ENCODE measurements at regions of chr15 and their contacts with region 1.

Region 1: DNA sequence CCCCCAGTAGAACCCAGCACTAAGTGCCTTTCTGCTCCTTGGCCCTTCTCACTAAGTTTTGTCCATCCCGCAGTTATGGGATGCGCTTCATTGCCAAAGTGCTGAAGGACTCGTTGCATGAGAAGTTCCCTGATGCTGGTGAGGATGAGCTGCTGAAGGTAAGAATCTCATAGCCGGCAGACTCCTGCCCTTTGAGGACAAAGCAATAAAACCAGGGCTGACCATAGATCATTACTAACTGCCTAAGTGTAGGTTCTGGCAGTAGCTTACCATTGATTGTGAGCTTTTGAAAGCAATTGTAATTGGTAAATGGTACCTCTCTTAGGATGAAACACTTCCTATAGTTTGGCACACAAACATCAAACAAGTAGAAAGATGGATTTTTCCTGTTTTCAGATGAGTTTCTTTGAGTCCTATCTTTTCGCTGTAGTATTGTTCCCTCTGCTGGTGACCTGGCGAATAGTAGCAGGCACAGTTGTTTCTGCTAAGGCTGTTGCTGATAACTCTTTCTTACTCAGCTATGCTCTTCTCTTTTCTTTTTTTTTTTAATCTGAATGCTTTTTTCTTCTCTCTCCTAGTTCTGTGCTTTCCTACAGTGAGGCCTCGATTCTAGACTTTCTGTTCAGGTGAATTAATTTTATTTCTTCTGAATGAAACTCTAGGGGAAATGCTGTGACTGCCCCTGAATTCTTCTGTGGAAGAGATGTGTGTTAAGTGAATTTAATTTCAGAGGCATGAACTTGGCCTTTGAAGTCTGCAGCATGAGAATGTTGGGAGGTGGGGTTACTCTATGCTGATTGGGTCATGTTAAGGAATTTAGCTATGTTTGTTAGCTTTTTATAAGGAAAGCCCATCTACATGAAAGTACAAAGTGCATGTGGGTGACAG is 47.4 kb upstream of the CRTC3 start:
- DNase-seq: peak; percentile 35 to 64
- ATAC-seq: peak; percentile 83 to 87; a peak in 5 of 6 replicates
- H3K4me3 ChIP-seq: no peak overlapping the region
- H3K27ac ChIP-seq: no peak overlapping the region
- H3K4me1 ChIP-seq: no peaks in the 10 kb centered on the region
- CTCF ChIP-seq: peak; percentile 98
- EP300 ChIP-seq: no peak
- POLR2A ChIP-seq: no peak
- RAD21 ChIP-seq: peak; percentile 98

Region 2: DNA sequence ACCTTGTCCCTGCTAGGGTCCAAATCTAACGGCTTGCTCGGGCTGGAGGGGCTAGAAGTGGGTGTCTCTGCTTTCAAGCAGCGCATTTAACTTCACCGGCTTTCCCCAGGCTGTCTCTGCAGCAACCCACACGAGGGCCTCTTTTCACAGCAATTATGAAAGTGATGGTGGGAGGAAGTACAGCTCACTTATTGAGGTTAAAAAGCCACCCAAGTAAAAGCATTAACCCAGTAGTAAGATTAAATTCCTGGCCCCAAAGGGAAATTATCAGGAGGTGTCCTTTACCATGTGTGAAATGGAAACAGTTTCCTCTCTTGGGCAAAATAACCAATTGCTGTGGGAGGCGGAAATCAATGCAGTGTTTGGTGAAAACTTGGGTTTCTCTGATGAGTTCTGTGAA is 175.8 kb before region 1 on chr15:
- CTCF ChIA-PET with region 1: interaction called, 35 read pairs
- POLR2A ChIA-PET with region 1: no interaction called
- DNase-seq: no peak
- ATAC-seq: no peak
- H3K4me3 ChIP-seq: no peak overlapping the region
- H3K27ac ChIP-seq: no peak overlapping the region
- H3K4me1 ChIP-seq: no peaks in the 10 kb centered on the region
- CTCF ChIP-seq: no peak
- EP300 ChIP-seq: no peak
- POLR2A ChIP-seq: no peak
- RAD21 ChIP-seq: no peak

Region 3: GRCh38 chr15:90362936-90363212 is 119.5 kb before region 1 on chr15:
- CTCF ChIA-PET with region 1: interaction called, 173 read pairs
- POLR2A ChIA-PET with region 1: interaction called, 3 read pairs
- DNase-seq: no peak
- ATAC-seq: peak in 1 of 2 experiments; percentile 44; a peak in 3 of 6 replicates
- H3K4me3 ChIP-seq: no peak overlapping the region
- H3K27ac ChIP-seq: peak overlapping the region; percentile 31 to 73; a peak in 5 of 6 replicates
- H3K4me1 ChIP-seq: peaks cover 39% of the 10 kb centered on the region
- CTCF ChIP-seq: no peak
- EP300 ChIP-seq: no peak
- POLR2A ChIP-seq: no peak
- RAD21 ChIP-seq: no peak

Region 4: GRCh38 chr15:90400406-90401314 is 81.7 kb before region 1 on chr15:
- CTCF ChIA-PET with region 1: interaction called, 16 read pairs
- POLR2A ChIA-PET with region 1: no interaction called
- DNase-seq: peak; percentile 94
- ATAC-seq: peak; percentile 97 to 98
- H3K4me3 ChIP-seq: peak overlapping the region; percentile 25; the same call in 2 of the 3 replicates
- H3K27ac ChIP-seq: peak overlapping the region; percentile 76 to 84
- H3K4me1 ChIP-seq: peaks cover 63% of the 10 kb centered on the region
- CTCF ChIP-seq: no peak
- EP300 ChIP-seq: no peak
- POLR2A ChIP-seq: no peak
- RAD21 ChIP-seq: 0 out of 5 replicates have a peak, but pooled peaks of 1 of the 2 experiments have one; percentile 18

Region 5: DNA sequence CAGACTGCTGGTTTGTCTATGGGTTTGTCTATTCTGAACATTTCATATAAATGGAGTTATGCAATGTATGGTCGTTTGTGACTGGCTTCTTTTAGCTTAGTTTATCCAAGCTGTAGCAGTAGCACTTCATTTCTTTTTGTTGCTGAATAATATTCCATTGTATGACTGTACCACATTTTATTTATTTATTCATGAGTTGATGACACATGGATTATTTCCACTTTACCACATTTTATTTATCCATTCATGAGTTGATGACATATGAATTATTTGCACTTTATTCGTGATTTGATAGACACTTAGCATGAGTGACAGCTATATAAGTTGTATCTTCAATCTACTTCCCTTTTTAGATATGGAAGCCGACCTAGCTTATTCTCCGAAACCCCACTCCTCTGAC is 24.3 kb before region 1 on chr15:
- CTCF ChIA-PET with region 1: interaction called, 46 read pairs
- POLR2A ChIA-PET with region 1: no interaction called
- DNase-seq: no peak
- ATAC-seq: no peak
- H3K4me3 ChIP-seq: no peak overlapping the region
- H3K27ac ChIP-seq: no peak overlapping the region
- H3K4me1 ChIP-seq: no peaks in the 10 kb centered on the region
- CTCF ChIP-seq: no peak
- EP300 ChIP-seq: no peak
- POLR2A ChIP-seq: no peak
- RAD21 ChIP-seq: no peak

Region 6: DNA sequence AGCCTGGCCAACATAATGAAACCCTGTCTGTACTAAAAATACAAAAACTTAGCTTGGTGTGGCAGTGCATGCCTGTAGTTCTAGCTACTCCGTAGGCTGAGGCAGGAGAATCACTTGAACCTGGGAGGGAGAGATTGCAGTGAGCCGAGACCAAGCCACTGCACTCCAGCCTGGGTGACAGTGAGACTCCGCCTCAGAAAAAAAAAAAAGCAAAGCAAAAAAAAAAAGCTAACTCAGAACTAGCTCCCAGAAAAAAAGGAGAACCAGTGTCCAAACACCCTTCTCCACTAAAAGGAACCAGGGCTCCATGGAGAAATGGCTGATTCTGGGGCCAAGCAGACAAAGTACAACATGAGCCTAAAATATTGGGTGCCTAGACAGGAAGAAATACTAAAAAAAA is 30.6 kb after region 1 on chr15:
- CTCF ChIA-PET with region 1: interaction called, 14 read pairs
- POLR2A ChIA-PET with region 1: no interaction called
- DNase-seq: no peak
- ATAC-seq: peak in 1 of 2 experiments; percentile 40; a peak in 2 of 6 replicates
- H3K4me3 ChIP-seq: no peak overlapping the region
- H3K27ac ChIP-seq: no peak overlapping the region
- H3K4me1 ChIP-seq: peaks cover 6% of the 10 kb centered on the region
- CTCF ChIP-seq: no peak
- EP300 ChIP-seq: no peak
- POLR2A ChIP-seq: no peak
- RAD21 ChIP-seq: no peak

Region 7: DNA sequence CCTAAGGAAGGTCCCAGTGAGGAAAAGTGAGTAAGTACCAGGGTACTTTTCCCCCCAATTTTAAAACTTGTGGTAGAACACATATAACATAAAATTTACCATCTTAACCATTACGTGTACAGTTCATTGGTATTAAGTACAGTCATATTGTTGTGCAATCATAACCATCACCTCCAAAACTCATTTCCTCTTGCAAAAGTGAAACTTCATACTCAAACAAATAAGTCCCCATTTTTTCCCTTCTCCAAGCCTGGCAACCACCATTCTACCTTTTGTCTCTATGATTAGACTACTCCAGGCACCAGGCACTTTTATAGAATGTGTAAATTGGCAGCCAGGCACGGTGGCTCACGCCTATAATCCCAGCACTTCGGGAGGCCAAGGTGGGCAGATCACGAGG is 499.8 kb after region 1 on chr15:
- CTCF ChIA-PET with region 1: no interaction called
- POLR2A ChIA-PET with region 1: no interaction called
- DNase-seq: no peak
- ATAC-seq: no peak
- H3K4me3 ChIP-seq: no peak overlapping the region
- H3K27ac ChIP-seq: no peak overlapping the region
- H3K4me1 ChIP-seq: peaks cover 12% of the 10 kb centered on the region
- CTCF ChIP-seq: no peak
- EP300 ChIP-seq: no peak
- POLR2A ChIP-seq: no peak
- RAD21 ChIP-seq: no peak

Measured in A549 (cell line).